Gastrocnemius medialis (tissue), 4 donors: ENCODE measurements at regions of chr13 and their contacts with region 1.

Region 1: GRCh38 chr13:50529154-50529882 is 314.2 kb downstream of the DLEU7 start:
- DNase-seq: peak; percentile 72 to 89
- ATAC-seq: peak; percentile 68 to 79
- H3K4me3 ChIP-seq: peak overlapping the region; percentile 31 to 43 (median 40)
- H3K27ac ChIP-seq: peak overlapping the region; percentile 81 to 91 (median 84)
- H3K4me1 ChIP-seq: peaks cover 48 to 54% of the 10 kb centered on the region in 2 donors
- H3K27me3 ChIP-seq: no peaks in the 10 kb centered on the region
- CTCF ChIP-seq: no peak
- POLR2A ChIP-seq: no peak

Region 2: GRCh38 chr13:49936085-49936940 is 593.0 kb before region 1 on chr13 and contains the start of gene SPRYD7:
- in situ Hi-C with region 1: no loop called
- intact Hi-C with region 1: loop called (anchors 5 kb)
- DNase-seq: peak; percentile 96 to 98
- ATAC-seq: peak; percentile 92 to 93
- H3K4me3 ChIP-seq: peak within 1 kb of the TSS; percentile 80 to 98 (median 88)
- H3K27ac ChIP-seq: peak within 1 kb of the TSS; percentile 87 to 95 (median 92)
- H3K4me1 ChIP-seq: peaks cover 49 to 54% of the 10 kb centered on the region in 2 donors
- H3K27me3 ChIP-seq: no peaks in the 10 kb centered on the region
- CTCF ChIP-seq: peak; percentile 88 to 95 (median 93)
- POLR2A ChIP-seq: peak; percentile 77 to 83
- total RNA-seq, gene SPRYD7: 9.8 to 24.7 (median 17.9) TPM

Region 3: GRCh38 chr13:49985129-49985528 is 544.2 kb before region 1 on chr13:
- in situ Hi-C with region 1: loop called in 3 of 4 experiments (anchors 10 kb)
- intact Hi-C with region 1: no loop called
- DNase-seq: peak; percentile 28 to 44
- ATAC-seq: peak; percentile 67 to 81
- H3K4me3 ChIP-seq: no peak overlapping the region
- H3K27ac ChIP-seq: peak overlapping the region; percentile 44 to 57 (median 50)
- H3K4me1 ChIP-seq: peaks cover 22 to 24% of the 10 kb centered on the region in 2 donors
- H3K27me3 ChIP-seq: no peaks in the 10 kb centered on the region
- CTCF ChIP-seq: no peak
- POLR2A ChIP-seq: no peak

Region 4: DNA sequence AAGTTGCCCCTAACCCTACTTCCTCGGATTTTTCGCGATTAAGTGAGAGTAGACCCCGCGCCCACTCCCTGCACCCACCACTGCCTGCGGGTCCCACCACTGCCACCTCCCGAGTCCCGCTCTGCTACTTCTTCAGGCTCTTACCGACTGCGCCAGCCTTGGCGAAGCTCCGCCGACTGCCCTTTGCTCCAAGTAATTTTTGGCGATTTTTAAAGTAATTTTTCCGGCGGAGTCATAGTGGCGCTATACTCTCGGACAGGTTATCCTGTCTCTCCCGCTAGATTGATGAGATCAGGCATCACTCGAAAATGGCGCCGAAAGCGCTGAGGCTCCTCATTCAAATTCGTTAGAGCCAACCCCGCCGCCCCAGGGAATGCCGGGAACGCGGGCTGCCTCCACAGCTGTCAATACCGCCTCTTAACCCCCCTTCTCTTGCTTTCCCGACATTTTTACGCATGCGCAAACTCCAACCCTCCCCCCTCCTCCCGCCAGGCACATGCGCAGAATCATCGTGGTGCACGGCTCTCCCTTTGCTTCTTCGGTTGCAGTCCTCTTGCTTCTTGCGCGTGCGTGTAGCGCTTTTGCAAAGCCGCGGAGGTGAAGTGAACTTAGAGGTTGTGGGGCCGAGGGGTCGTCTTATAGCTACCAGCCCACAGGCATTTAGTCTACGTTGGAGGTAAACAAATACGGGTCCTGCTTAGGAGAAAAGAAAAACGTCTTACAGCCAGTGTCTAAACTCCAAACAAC is 447.5 kb before region 1 on chr13:
- in situ Hi-C with region 1: loop called in 2 of 4 experiments (anchors 10 to 25 kb)
- intact Hi-C with region 1: loop called (anchors 5 kb)
- DNase-seq: peak; percentile 97 to 98
- ATAC-seq: peak; percentile 96
- H3K4me3 ChIP-seq: peak overlapping the region; percentile 68 to 88 (median 80)
- H3K27ac ChIP-seq: peak overlapping the region; percentile 85 to 90 (median 87)
- H3K4me1 ChIP-seq: peaks cover 57 to 65% of the 10 kb centered on the region in 2 donors
- H3K27me3 ChIP-seq: no peaks in the 10 kb centered on the region
- CTCF ChIP-seq: peak in 2 of 5 experiments; percentile 10 to 19
- POLR2A ChIP-seq: peak; percentile 25 to 63

Region 5: DNA sequence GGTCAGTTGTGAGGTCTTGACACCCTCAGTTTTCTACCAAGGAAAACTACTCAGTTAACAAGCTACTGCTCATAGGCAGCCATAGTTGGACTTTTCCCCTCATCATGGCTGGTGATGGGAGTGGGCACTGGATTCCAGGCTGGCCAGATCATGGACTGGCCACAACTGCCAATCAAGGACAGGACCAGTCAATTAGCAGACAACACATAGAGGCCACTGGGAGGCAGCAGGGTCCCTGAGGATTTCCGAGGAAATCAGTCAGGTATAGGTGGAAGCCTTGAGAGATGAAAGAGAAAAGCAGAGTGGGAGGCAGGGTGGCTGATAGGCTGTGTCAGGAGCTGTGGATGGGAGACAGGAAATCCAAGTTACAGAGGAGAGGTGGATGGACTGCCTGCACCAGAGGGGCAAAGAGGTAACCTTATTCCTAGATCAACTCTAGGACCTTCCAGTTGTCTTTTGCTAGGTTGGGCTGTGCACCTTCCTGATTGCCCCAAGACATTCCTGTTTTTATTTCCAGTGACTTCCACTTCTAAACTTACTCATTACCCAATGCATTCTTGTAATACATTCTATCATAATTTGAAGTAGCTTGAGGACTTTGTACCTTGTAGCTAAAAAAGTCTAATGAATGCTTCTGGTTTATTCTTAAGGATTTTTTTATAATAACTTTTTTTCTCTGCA is 152.3 kb before region 1 on chr13:
- in situ Hi-C with region 1: loop called in 3 of 4 experiments (anchors 10 to 25 kb)
- intact Hi-C with region 1: loop called (anchors 1 kb)
- DNase-seq: peak in 1 of 2 donors; percentile 42
- ATAC-seq: peak; percentile 56 to 70
- H3K4me3 ChIP-seq: no peak overlapping the region
- H3K27ac ChIP-seq: no peak overlapping the region
- H3K4me1 ChIP-seq: peaks cover 11 to 13% of the 10 kb centered on the region in 2 donors
- H3K27me3 ChIP-seq: no peaks in the 10 kb centered on the region
- CTCF ChIP-seq: peak in 4 of 5 experiments; percentile 45 to 54 (median 46)
- POLR2A ChIP-seq: no peak

Region 6: DNA sequence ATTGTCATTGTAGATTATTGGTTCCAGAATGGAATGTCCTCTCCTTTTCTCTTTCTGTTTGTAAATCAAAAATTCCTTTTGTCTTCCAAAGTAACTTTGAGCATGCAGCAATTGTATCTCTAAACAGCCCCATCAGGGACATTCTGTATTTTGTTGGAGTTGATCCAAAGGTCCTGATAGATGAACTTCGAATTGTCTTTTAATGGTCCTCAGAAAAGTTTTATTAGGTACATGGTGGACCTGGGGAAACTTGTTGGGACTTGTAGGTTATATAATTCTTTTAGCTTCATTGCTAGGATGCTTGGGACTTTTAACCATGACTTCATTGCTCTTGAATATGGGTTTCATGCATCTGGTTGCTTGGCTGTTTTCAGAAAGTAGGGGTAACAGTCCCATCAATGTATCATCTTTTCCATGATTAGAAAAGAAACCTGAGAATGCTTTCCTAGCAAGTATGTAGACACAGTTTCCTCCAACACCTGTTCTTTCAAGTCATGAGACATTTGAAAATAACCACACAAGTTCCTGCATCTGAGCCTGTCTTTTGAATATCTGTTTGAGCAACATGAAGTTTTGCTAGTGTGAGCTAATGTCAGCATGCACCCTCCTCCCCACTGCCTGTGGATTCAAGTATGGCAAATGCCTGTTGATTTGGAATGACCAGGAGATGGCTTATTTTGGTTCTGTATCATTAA is 101.0 kb before region 1 on chr13:
- in situ Hi-C with region 1: no loop called
- intact Hi-C with region 1: loop called (anchors 2 kb)
- DNase-seq: peak; percentile 28 to 29
- ATAC-seq: peak; percentile 93 to 97
- H3K4me3 ChIP-seq: no peak overlapping the region
- H3K27ac ChIP-seq: peak overlapping the region; percentile 62 to 78 (median 69)
- H3K4me1 ChIP-seq: peaks cover 28 to 32% of the 10 kb centered on the region in 2 donors
- H3K27me3 ChIP-seq: no peaks in the 10 kb centered on the region
- CTCF ChIP-seq: no peak
- POLR2A ChIP-seq: no peak

Region 7: GRCh38 chr13:50873467-50873866 is 344.1 kb after region 1 on chr13:
- in situ Hi-C with region 1: no loop called
- intact Hi-C with region 1: no loop called
- DNase-seq: no peak
- ATAC-seq: no peak
- H3K4me3 ChIP-seq: no peak overlapping the region
- H3K27ac ChIP-seq: no peak overlapping the region
- H3K4me1 ChIP-seq: no peaks in the 10 kb centered on the region
- H3K27me3 ChIP-seq: no peaks in the 10 kb centered on the region
- CTCF ChIP-seq: no peak
- POLR2A ChIP-seq: no peak

Region 8: GRCh38 chr13:50911937-50912795 is 382.8 kb after region 1 on chr13:
- in situ Hi-C with region 1: no loop called
- intact Hi-C with region 1: loop called (anchors 5 kb)
- DNase-seq: peak; percentile 52 to 71
- ATAC-seq: peak; percentile 25 to 43
- H3K4me3 ChIP-seq: no peak overlapping the region
- H3K27ac ChIP-seq: no peak overlapping the region
- H3K4me1 ChIP-seq: peaks cover 14 to 15% of the 10 kb centered on the region in 2 donors
- H3K27me3 ChIP-seq: no peaks in the 10 kb centered on the region
- CTCF ChIP-seq: peak; percentile 49 to 89 (median 71)
- POLR2A ChIP-seq: no peak